ENCODE measurements at regions of chr15 and their contacts with region 1.

Region 1: GRCh38 chr15:90886041-90886614 is 1.8 kb downstream of the FES start:
- DNase-seq: peak; percentile 81
- H3K4me3 ChIP-seq: no peak overlapping the region
- H3K27ac ChIP-seq: peak overlapping the region; percentile 86 to 92 (median 90)
- H3K4me1 ChIP-seq: peaks cover 6 to 35% (median 23%) of the 10 kb centered on the region in 4 donors
- H3K27me3 ChIP-seq: no peaks in the 10 kb centered on the region
- CTCF ChIP-seq: peak; percentile 97 to 99 (median 98)
- EP300 ChIP-seq: no peak
- POLR2A ChIP-seq: no peak

Region 2: GRCh38 chr15:90320061-90320884 is 565.9 kb before region 1 on chr15:
- in situ Hi-C with region 1: loop called in 1 of 4 experiments (anchors 25 kb)
- intact Hi-C with region 1: no loop called
- DNase-seq: peak; percentile 79
- H3K4me3 ChIP-seq: peak overlapping the region in 1 of 4 donors; percentile 37
- H3K27ac ChIP-seq: peak overlapping the region; percentile 38 to 75 (median 58)
- H3K4me1 ChIP-seq: peaks cover 11 to 28% (median 20%) of the 10 kb centered on the region in 4 donors
- H3K27me3 ChIP-seq: no peaks in the 10 kb centered on the region
- CTCF ChIP-seq: peak; percentile 98 to 99 (median 99)
- EP300 ChIP-seq: no peak
- POLR2A ChIP-seq: no peak

Region 3: GRCh38 chr15:90648137-90649070 is 237.7 kb before region 1 on chr15:
- in situ Hi-C with region 1: loop called (anchors 5 to 25 kb)
- intact Hi-C with region 1: loop called (anchors 1 kb)
- DNase-seq: peak; percentile 67
- H3K4me3 ChIP-seq: peak overlapping the region in 1 of 4 donors; percentile 16
- H3K27ac ChIP-seq: peak overlapping the region; percentile 43 to 72 (median 60)
- H3K4me1 ChIP-seq: peaks cover 0 to 17% (median 9%) of the 10 kb centered on the region in 4 donors
- H3K27me3 ChIP-seq: no peaks in the 10 kb centered on the region
- CTCF ChIP-seq: peak; percentile 85 to 95 (median 89)
- EP300 ChIP-seq: peak; percentile 49
- POLR2A ChIP-seq: no peak

Region 4: DNA sequence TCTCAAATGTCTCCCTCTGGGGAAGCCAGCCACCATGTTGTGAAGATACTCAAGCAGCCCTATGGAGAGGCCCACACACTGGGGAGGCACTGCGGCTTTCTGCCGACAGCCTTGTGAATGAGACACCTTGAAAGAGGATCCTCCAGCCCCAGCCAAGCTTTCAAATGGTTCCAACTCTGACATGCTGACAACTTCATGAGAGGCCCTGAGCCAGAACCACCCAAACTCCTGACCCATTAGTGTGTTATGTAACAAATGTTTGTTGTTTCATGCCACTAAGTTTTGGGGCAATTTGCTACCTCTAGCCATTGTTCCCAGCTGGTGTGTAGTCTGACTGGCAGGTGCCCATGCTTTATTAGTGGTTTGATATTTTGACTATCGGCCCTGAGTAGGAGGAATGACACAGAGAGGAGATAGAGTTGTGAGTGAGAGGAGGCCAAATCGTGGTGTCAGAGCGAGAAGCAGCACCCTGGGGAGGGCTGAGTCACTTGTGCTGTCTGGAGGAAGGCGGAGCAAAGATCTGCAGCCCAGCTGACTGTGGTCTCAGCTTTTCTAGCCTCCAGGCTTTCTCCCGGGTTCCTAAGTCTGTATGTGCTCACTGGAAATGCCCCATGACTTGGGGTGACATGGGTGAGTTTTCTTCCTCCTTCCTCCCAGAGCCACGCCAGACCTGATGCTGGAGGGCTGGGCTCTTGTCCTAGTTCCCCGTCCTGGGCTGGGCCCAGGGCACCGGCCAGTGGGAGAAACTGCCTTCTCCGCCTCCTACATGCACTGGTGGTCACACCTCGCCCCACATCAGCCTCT is 225.7 kb before region 1 on chr15:
- in situ Hi-C with region 1: loop called in 1 of 4 experiments (anchors 25 kb)
- intact Hi-C with region 1: no loop called
- DNase-seq: peak; percentile 54
- H3K4me3 ChIP-seq: peak overlapping the region in 1 of 4 donors; percentile 1
- H3K27ac ChIP-seq: peak overlapping the region; percentile 41 to 56 (median 52)
- H3K4me1 ChIP-seq: peaks cover 2 to 19% (median 12%) of the 10 kb centered on the region in 4 donors
- H3K27me3 ChIP-seq: no peaks in the 10 kb centered on the region
- CTCF ChIP-seq: no peak
- EP300 ChIP-seq: no peak
- POLR2A ChIP-seq: peak; percentile 24

Region 5: DNA sequence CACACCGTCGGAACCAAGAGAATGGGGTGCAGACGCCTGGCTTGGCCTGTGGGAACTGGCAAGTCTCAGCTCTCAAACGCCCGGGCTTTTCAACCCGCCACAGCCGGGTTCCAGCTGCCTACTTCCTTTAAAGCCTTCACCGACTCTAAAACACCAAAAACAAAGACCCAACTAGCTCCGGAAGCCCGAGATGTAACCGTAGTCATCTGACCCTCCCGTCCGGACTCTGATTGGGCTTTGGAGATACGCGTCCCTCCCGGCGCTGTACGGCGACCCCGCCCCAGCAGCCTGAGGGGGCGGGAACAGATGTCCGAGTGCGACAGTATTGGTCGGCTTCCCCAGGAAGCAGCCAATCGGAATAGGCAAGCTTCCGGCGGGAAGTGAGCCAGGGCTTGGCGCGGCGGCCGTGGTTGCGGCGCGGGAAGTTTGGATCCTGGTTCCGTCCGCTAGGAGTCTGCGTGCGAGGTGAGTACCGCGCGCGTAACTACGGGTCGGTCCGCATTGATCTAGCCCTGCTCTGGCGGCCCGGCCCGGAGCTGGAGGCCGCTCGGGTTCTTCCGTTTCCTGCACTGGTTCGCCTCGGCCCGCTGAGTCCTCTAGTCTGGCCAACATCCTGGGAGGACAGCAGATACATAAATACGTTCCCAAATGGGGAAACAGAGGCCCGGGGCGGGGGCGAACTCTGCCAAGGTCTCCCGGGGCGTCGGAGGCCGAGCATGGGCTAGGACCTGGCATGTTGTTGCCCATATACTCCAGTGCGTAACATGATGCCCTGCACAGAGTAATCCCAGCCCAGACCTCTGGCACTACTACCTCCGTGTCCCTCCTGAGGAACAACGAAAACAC is 168.9 kb before region 1 on chr15 and contains the start of gene BLM:
- in situ Hi-C with region 1: no loop called
- intact Hi-C with region 1: loop called (anchors 10 kb)
- DNase-seq: peak; percentile 96
- H3K4me3 ChIP-seq: peak within 1 kb of the TSS; percentile 50 to 73 (median 60)
- H3K27ac ChIP-seq: peak within 1 kb of the TSS; percentile 88 to 97 (median 94)
- H3K4me1 ChIP-seq: peaks cover 4 to 26% (median 13%) of the 10 kb centered on the region in 4 donors
- H3K27me3 ChIP-seq: no peaks in the 10 kb centered on the region
- CTCF ChIP-seq: peak; percentile 42 to 73 (median 50)
- EP300 ChIP-seq: no peak
- POLR2A ChIP-seq: peak; percentile 80
- total RNA-seq, gene BLM: 1.5 to 6.4 (median 2.0) TPM

Measured in transverse colon (tissue), 4 donors.